ENCODE measurements at regions of chr5 and their contacts with region 1.

Region 1: GRCh38 chr5:148186248-148186996 is 16.4 kb upstream of the SPINK6 start:
- DNase-seq: no peak
- ATAC-seq: peak in 3 of 4 donors; percentile 52 to 82 (median 71)
- H3K4me3 ChIP-seq: no peak overlapping the region
- H3K27ac ChIP-seq: peak overlapping the region in 1 of 12 donors; percentile 75
- H3K4me1 ChIP-seq: peaks cover 0 to 9% (median 0%) of the 10 kb centered on the region in 12 donors
- H3K27me3 ChIP-seq: no peaks in the 10 kb centered on the region
- CTCF ChIP-seq: no peak
- POLR2A ChIP-seq: no peak

Region 2: GRCh38 chr5:148033146-148033545 is 153.3 kb before region 1 on chr5:
- intact Hi-C with region 1: no loop called
- DNase-seq: no peak
- ATAC-seq: no peak
- H3K4me3 ChIP-seq: no peak overlapping the region
- H3K27ac ChIP-seq: no peak overlapping the region
- H3K4me1 ChIP-seq: no peaks in the 10 kb centered on the region
- H3K27me3 ChIP-seq: no peaks in the 10 kb centered on the region
- CTCF ChIP-seq: no peak
- POLR2A ChIP-seq: no peak

Region 3: GRCh38 chr5:148457183-148457620 is 270.8 kb after region 1 on chr5:
- intact Hi-C with region 1: loop called in 1 of 10 experiments (anchors 10 kb)
- DNase-seq: no peak
- ATAC-seq: no peak
- H3K4me3 ChIP-seq: no peak overlapping the region
- H3K27ac ChIP-seq: no peak overlapping the region
- H3K4me1 ChIP-seq: peaks cover 0 to 34% (median 14%) of the 10 kb centered on the region in 12 donors
- H3K27me3 ChIP-seq: no peaks in the 10 kb centered on the region
- CTCF ChIP-seq: peak in 10 of 12 donors; percentile 19 to 51 (median 30)
- POLR2A ChIP-seq: no peak

Region 4: DNA sequence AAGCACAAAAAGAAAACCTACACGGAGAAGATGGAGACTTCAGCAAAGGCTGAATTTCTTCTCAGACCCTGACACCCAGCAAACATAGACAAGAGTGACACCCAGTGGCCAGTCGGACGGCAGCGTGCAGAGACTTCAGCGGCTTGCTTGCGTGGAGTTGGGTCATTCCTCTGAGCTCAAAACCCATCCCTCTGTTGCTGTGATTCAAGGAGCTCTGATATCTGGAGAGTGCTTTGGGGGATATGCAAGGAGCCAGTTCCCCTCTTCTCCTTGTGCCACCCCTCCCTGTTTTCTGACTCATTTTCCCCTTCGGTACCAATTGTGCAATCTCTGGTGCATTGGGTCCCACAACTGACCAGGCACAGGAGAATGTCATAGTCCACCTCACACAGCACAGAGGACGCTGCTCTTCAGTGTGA is 849.0 kb after region 1 on chr5:
- intact Hi-C with region 1: loop called in 1 of 10 experiments (anchors 10 kb)
- DNase-seq: peak; percentile 71 to 88 (median 77)
- ATAC-seq: peak; percentile 82 to 94 (median 91)
- H3K4me3 ChIP-seq: no peak overlapping the region
- H3K27ac ChIP-seq: no peak overlapping the region
- H3K4me1 ChIP-seq: peaks cover 0 to 39% (median 8%) of the 10 kb centered on the region in 12 donors
- H3K27me3 ChIP-seq: no peaks in the 10 kb centered on the region
- CTCF ChIP-seq: peak; percentile 69 to 91 (median 86)
- POLR2A ChIP-seq: no peak

Measured in heart left ventricle (tissue), 16 donors.